Activated naive CD4-positive, alpha-beta T cell treated with anti-CD3 and anti-CD28 coated beads for 36 hours (primary cell): ENCODE measurements at regions of chr11 and their contacts with region 1.

Region 1: DNA sequence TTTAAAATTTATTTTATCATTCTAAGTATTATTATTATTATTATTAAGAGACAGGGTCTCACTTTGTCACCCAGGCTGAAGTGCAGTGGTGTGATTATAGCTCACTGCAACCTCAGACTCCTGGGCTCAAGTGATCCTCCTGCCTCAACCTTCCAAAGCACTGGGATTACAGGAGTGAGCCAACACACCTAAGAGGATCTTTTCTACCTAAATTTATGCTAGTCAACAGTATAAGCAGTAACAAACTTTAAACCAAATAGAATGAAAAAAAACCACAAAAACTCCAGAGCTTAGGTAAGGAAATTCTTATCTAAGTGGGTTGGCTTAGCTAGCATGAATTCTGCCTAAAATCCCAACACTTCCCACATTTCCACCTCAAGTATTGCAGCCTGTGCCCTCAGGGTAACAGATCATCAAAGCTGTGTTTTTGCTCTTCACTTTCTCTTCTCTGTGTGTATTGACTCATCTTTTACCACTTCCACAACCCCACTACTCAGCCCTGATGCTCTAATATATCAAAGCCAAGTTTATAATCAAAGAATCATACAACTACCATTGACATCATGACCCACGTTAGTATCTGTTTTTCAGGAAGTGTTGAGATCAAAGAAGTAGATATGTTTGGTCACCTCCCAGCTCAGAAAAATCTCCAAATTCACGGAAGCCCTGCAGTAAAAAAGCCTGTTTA is 93.7 kb upstream of the SPON1 start:
- DNase-seq: peak; percentile 61
- H3K4me3 Mint-ChIP-seq: peak overlapping the region; percentile 42
- H3K27ac Mint-ChIP-seq: peak overlapping the region; percentile 91
- H3K4me1 Mint-ChIP-seq: peaks cover 41% of the 10 kb centered on the region
- H3K27me3 Mint-ChIP-seq: no peaks in the 10 kb centered on the region

Region 2: DNA sequence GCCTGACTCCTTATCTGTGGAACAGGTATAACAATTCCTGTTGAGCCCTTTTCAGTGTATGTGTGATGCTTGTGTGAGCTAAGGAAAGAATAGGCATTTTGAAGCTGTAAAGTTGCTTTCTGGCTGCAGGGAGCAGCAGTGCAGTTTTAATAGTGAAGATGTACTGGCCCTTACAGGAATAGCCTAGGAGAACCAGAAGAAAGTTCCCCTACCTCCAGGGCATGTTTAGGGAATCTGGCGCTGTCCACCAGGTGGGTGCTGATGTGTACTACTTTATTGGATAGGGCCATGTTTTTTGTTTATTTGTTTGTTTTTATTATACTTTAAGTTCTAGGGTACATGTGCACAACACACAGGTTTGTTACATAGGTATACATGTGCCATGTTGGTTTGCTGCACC is 579.8 kb before region 1 on chr11:
- CTCF ChIA-PET with region 1: no interaction called
- intact Hi-C with region 1: loop called (anchors 2 kb)
- DNase-seq: no peak
- H3K4me3 Mint-ChIP-seq: no peak overlapping the region
- H3K27ac Mint-ChIP-seq: no peak overlapping the region
- H3K4me1 Mint-ChIP-seq: peaks cover 76% of the 10 kb centered on the region
- H3K27me3 Mint-ChIP-seq: no peaks in the 10 kb centered on the region

Region 3: GRCh38 chr11:13668102-13668956 is 200.5 kb before region 1 on chr11 and contains the start of gene FAR1:
- CTCF ChIA-PET with region 1: interaction called, 5 read pairs
- intact Hi-C with region 1: loop called (anchors 2 kb)
- DNase-seq: peak; percentile 98
- H3K4me3 Mint-ChIP-seq: peak within 1 kb of the TSS; percentile 95
- H3K27ac Mint-ChIP-seq: peak within 1 kb of the TSS; percentile 92
- H3K4me1 Mint-ChIP-seq: peaks cover 40% of the 10 kb centered on the region
- H3K27me3 Mint-ChIP-seq: peaks cover 7% of the 10 kb centered on the region
- total RNA-seq, gene FAR1: 37.2 to 42.3 TPM

Region 4: GRCh38 chr11:13928566-13929251 is 59.9 kb after region 1 on chr11:
- CTCF ChIA-PET with region 1: no interaction called
- intact Hi-C with region 1: loop called (anchors 2 kb)
- DNase-seq: peak; percentile 42
- H3K4me3 Mint-ChIP-seq: no peak overlapping the region
- H3K27ac Mint-ChIP-seq: no peak overlapping the region
- H3K4me1 Mint-ChIP-seq: peaks cover 31% of the 10 kb centered on the region
- H3K27me3 Mint-ChIP-seq: no peaks in the 10 kb centered on the region

Region 5: DNA sequence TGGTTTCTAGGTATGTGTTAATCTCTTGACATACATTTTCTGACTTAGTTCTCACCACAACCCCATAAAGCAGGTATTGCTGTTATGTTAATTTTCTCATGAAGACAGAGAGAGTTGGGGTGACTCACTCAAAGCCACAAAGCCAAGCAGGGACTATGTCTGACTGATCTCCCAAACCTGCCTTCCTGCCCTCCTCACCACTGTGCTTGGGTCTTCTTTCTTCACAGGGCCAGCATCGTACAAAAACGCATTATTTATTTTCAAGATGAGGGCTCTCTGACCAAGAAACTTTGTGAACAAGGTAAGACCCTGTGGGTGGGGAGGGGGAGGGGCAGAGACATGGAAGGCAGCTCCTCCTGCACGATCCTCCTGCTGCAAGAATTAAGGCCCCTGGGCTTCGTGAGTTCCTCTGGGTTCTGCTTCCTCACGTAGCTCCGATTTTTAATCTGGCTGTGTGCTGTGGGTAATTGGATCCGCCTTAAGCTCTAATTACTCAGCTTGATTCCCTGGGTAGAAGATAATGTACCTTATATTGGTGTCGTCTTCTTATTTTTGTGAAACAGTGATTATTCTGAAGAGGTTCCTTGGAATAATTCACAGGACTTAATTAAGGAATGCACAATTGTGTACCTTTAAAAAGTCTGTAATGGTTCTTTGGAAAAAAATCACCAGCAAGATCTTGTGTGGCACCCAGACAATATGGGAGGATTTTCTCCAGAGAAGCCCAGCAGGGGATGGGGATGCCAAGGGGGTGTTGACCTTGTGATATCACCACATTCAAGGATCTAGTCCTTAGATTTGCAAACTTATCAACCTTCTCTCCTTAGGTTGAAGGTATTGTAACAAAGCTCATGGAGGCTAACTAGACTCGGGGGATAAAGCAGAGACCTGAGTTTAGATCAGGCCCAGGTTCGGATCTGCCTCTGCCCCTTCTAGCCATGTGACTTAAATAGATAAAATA is 206.5 kb after region 1 on chr11:
- CTCF ChIA-PET with region 1: no interaction called
- intact Hi-C with region 1: loop called (anchors 2 kb)
- DNase-seq: peak; percentile 86
- H3K4me3 Mint-ChIP-seq: peak overlapping the region; percentile 13
- H3K27ac Mint-ChIP-seq: peak overlapping the region; percentile 62
- H3K4me1 Mint-ChIP-seq: peaks cover 55% of the 10 kb centered on the region
- H3K27me3 Mint-ChIP-seq: no peaks in the 10 kb centered on the region

Region 6: GRCh38 chr11:14336507-14337503 is 468.0 kb after region 1 on chr11:
- CTCF ChIA-PET with region 1: no interaction called
- intact Hi-C with region 1: loop called (anchors 10 kb)
- DNase-seq: peak; percentile 32
- H3K4me3 Mint-ChIP-seq: peak overlapping the region; percentile 16
- H3K27ac Mint-ChIP-seq: peak overlapping the region; percentile 76
- H3K4me1 Mint-ChIP-seq: peaks cover 52% of the 10 kb centered on the region
- H3K27me3 Mint-ChIP-seq: no peaks in the 10 kb centered on the region

Region 7: DNA sequence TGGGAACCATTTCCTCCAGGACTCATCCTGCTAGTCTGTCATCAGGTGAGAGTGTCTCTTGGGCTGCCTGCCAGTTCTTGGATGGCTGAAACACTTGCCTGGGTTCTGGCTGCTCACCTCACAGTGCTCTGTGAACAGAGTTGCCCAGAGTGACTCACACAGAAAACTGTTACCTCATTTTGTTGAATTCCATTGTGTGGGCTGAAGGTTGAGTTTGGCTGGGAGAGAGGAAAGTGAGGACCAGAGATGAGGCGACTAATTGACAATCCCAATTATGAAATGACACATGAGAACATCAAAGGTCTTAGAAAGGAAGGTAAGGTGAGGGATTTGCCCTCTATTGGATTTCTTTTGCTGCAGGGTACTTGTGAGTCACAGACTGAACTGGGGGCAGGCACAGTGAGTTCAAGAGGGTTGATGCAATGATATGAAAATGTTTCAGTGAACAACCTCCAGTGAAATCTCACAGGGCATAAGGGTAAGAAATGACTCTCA is 1184.4 kb after region 1 on chr11:
- CTCF ChIA-PET with region 1: no interaction called
- intact Hi-C with region 1: loop called (anchors 5 kb)
- DNase-seq: peak; percentile 75
- H3K4me3 Mint-ChIP-seq: no peak overlapping the region
- H3K27ac Mint-ChIP-seq: peak overlapping the region; percentile 83
- H3K4me1 Mint-ChIP-seq: peaks cover 26% of the 10 kb centered on the region
- H3K27me3 Mint-ChIP-seq: peaks cover 2% of the 10 kb centered on the region